ENCODE measurements at regions of chr16 and their contacts with region 1.

Region 1: GRCh38 chr16:56909527-56909979 is 22.4 kb upstream of the HERPUD1 start:
- DNase-seq: no peak
- ATAC-seq: no peak
- H3K4me3 ChIP-seq: no peak overlapping the region
- H3K27ac ChIP-seq: no peak overlapping the region
- H3K4me1 ChIP-seq: no peaks in the 10 kb centered on the region
- H3K27me3 ChIP-seq: no peaks in the 10 kb centered on the region
- CTCF ChIP-seq: no peak

Region 2: DNA sequence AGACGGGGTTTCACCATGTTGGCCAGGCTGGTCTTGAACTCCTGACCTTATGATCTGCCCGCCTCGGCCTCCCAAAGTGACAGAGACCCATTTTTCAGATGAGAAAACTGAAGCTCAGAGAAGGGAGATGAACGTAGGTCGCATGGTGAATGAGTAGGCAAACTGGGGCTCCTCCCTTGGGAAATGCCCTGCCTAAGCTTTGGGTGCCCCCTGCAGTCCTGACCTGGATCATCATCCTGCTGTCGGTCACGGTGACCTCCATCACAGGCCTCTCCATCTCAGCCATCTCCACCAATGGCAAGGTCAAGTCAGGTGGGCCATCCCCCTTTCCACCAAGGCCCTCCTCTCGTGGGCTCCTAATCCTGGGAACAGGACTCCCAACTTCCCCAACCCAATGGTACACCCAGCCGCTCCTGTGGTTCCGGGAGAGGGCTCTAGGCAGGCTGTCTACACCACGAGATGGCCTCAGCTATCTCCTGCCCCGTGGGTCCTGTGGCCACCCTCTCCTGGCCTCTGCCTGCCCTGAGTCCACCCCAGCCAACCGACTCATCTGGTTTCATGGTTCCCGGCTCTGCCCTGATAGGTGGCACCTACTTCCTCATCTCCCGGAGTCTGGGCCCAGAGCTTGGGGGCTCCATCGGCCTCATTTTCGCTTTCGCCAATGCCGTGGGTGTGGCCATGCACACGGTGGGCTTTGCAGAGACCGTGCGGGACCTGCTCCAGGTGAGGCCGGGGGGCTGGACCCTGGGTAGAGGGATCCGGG is 39.9 kb before region 1 on chr16:
- CTCF ChIA-PET with region 1: no interaction called
- POLR2A ChIA-PET with region 1: no interaction called
- in situ Hi-C with region 1: no loop called
- intact Hi-C with region 1: no loop called
- DNase-seq: no peak
- ATAC-seq: 0 out of 2 replicates have a peak, but pooled peaks have one; percentile 57
- H3K4me3 ChIP-seq: no peak overlapping the region
- H3K27ac ChIP-seq: no peak overlapping the region
- H3K4me1 ChIP-seq: no peaks in the 10 kb centered on the region
- H3K27me3 ChIP-seq: no peaks in the 10 kb centered on the region
- CTCF ChIP-seq: no peak; the same call in 1 of the 2 replicates

Region 3: GRCh38 chr16:56888806-56889205 is 20.7 kb before region 1 on chr16:
- CTCF ChIA-PET with region 1: interaction called, 10 read pairs
- POLR2A ChIA-PET with region 1: no interaction called
- in situ Hi-C with region 1: no loop called
- intact Hi-C with region 1: no loop called
- DNase-seq: no peak
- ATAC-seq: no peak
- H3K4me3 ChIP-seq: no peak overlapping the region
- H3K27ac ChIP-seq: no peak overlapping the region
- H3K4me1 ChIP-seq: no peaks in the 10 kb centered on the region
- H3K27me3 ChIP-seq: no peaks in the 10 kb centered on the region
- CTCF ChIP-seq: no peak

Region 4: DNA sequence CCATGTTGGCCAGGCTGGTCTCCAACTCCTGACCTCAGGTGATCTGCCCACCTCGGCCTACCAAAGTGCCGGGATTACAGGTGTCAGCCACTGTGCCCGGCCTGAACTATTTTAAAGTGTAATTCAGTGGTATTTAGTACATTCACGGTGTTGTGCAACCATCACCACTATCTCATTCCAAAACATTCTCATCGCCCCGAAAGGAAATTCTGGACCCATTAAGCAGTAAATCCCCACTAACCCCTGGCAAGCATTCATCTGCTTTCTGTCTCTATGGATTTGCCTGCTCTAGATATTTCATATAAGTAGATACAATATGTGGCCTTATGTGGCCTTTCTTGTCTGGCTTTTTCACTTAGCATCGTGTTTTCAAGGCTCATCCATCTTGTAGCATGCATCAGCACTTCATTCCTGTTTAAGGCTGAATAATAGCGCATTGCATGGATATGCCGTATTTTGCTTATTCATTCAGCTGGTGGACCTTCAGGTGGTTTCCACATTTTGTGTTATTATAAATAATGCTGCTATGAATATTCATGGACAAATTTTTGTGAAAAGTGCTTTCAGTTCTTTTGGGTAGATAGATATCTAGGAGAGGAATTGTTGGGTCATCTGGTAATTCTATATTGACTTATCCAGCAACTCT is 14.0 kb after region 1 on chr16:
- CTCF ChIA-PET with region 1: interaction called, 10 read pairs
- POLR2A ChIA-PET with region 1: no interaction called
- in situ Hi-C with region 1: no loop called
- intact Hi-C with region 1: no loop called
- DNase-seq: no peak
- ATAC-seq: no peak
- H3K4me3 ChIP-seq: no peak overlapping the region
- H3K27ac ChIP-seq: no peak overlapping the region
- H3K4me1 ChIP-seq: no peaks in the 10 kb centered on the region
- H3K27me3 ChIP-seq: no peaks in the 10 kb centered on the region
- CTCF ChIP-seq: no peak